PC-9 (cell line): ENCODE measurements at regions of chr19 and their contacts with region 1.

Region 1: GRCh38 chr19:44954824-44955586 is at the start of gene CLPTM1:
- DNase-seq: peak; percentile 93 to 94
- H3K4me3 ChIP-seq: peak within 1 kb of the TSS; percentile 89
- H3K27ac ChIP-seq: peak within 1 kb of the TSS; percentile 87
- H3K4me1 ChIP-seq: peaks cover 20% of the 10 kb centered on the region
- H3K27me3 ChIP-seq: no peaks in the 10 kb centered on the region
- CTCF ChIP-seq: no peak
- total RNA-seq, gene CLPTM1: 98.2 and 111 TPM in 2 replicates

Region 2: DNA sequence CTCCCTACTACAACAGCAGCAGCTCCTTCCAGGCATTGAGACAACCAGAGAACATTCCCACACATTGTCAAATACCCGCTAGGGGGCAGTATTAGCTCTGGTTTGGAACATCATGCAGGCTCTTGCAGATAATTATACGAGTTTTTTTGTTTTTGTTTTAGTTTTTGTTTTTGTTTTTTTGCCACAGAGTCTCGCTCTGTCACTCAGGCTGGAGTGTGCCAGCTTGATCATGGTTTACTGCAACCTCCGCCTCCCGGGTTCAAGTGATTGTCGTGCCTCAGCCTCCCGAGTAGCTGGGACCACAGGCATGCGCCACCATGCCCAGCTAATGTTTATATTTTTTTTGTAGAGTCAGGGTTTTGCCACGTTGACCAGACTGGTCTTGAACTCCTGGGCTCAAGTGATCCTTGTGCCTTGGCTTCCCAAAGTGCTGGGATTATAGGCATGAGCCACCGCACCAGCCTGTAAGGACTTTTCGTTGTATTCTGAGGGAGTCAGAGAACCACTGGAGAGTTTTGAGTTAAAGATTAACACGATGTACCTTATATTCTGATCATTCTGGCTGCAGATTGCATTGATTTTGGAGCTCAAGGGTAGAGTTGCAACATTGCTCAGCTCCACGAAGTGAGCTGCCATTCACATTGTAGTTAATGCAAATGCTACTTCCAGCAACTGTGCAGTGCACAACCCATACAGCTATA is 383.9 kb before region 1 on chr19:
- CTCF ChIA-PET with region 1: no interaction called
- POLR2A ChIA-PET with region 1: no interaction called
- intact Hi-C with region 1: loop called (anchors 10 kb)
- DNase-seq: peak; percentile 67 to 80
- H3K4me3 ChIP-seq: no peak overlapping the region
- H3K27ac ChIP-seq: no peak overlapping the region; the same call in 1 of the 2 replicates
- H3K4me1 ChIP-seq: peaks cover 67% of the 10 kb centered on the region
- H3K27me3 ChIP-seq: no peaks in the 10 kb centered on the region
- CTCF ChIP-seq: peak; percentile 92

Region 3: DNA sequence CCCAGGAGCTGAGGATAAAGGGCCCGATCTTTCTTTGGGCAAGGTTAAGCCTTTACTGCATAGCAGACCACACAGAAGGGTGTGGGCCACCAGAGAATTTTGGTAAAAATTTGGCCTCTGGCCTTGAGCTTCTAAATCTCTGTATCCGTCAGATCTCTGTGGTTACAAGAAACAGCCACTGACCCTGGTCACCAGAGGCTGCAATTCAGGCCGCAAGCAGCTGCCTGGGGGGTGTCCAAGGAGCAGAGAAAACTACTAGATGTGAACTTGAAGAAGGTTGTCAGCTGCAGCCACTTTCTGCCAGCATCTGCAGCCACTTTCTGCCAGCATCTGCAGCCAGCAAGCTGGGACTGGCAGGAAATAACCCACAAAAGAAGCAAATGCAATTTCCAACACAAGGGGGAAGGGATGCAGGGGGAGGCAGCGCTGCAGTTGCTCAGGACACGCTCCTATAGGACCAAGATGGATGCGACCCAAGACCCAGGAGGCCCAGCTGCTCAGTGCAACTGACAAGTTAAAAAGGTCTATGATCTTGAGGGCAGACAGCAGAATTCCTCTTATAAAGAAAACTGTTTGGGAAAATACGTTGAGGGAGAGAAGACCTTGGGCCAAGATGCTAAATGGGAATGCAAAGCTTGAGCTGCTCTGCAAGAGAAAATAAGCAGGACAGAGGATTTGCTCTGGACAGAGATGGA is 292.2 kb before region 1 on chr19:
- CTCF ChIA-PET with region 1: no interaction called
- POLR2A ChIA-PET with region 1: no interaction called
- intact Hi-C with region 1: no loop called
- DNase-seq: no peak
- H3K4me3 ChIP-seq: no peak overlapping the region
- H3K27ac ChIP-seq: no peak overlapping the region
- H3K4me1 ChIP-seq: no peaks in the 10 kb centered on the region
- H3K27me3 ChIP-seq: no peaks in the 10 kb centered on the region
- CTCF ChIP-seq: no peak

Region 4: GRCh38 chr19:44927746-44928145 is 27.3 kb before region 1 on chr19:
- CTCF ChIA-PET with region 1: no interaction called
- POLR2A ChIA-PET with region 1: no interaction called
- intact Hi-C with region 1: no loop called
- DNase-seq: peak in 1 of 2 experiments; percentile 34
- H3K4me3 ChIP-seq: no peak overlapping the region
- H3K27ac ChIP-seq: no peak overlapping the region
- H3K4me1 ChIP-seq: no peaks in the 10 kb centered on the region
- H3K27me3 ChIP-seq: 0 out of 2 replicates have a peak, but pooled peaks cover 5% of the 10 kb centered on the region
- CTCF ChIP-seq: no peak

Region 5: DNA sequence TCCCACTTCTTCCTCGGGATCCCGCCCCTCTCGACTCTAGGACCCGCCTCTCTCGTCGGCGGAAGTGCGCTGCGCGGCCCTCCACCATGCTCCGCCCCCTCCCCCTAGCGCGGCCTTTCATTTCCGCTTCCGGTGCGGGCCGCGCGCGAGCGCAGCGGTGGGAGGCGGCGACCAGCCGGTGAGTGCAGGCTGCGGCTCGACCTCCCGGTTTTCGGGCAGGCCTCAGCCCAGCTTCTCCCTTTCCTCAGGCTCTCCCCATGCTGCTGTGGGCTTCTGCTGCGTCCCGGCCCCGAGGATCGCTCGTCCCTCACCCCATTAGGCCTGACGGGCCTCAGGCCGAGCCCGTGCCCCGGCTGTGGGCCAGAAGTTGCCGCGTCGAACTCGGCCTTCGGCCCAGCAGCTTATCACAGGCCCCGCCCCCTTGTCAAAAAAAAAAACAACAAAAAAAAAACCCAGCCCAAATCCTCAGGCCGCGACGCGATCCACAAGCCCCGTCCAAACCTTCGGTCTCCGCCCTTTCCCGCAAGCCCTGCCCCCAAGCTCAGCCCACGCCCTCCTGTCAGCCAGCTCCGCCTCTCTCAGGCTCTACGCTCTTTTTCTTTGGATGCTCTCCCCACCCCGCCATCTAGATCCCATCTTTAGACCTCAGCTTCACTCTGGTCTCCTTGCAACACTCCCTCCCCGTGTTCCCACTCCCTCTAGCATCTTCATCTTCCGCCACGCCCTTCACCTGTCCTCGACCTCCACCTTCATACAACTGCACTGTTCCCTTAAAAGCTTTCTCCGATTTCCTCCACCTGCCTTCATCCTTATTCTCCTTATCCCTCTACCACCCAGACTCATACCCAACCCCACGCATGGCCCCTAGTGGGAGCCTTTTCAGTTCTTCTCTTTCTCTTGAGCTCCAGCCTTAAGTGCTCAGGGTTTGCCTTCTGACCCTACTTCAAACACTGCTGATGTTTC is 84.2 kb after region 1 on chr19 and contains the start of gene CLASRP:
- CTCF ChIA-PET with region 1: no interaction called
- POLR2A ChIA-PET with region 1: interaction called, 11 read pairs
- intact Hi-C with region 1: no loop called
- DNase-seq: peak; percentile 77 to 90
- H3K4me3 ChIP-seq: peak within 1 kb of the TSS; percentile 100
- H3K27ac ChIP-seq: peak within 1 kb of the TSS; percentile 81
- H3K4me1 ChIP-seq: peaks cover 12% of the 10 kb centered on the region
- H3K27me3 ChIP-seq: no peaks in the 10 kb centered on the region
- CTCF ChIP-seq: no peak
- total RNA-seq, gene CLASRP: 74.1 and 76.8 TPM in 2 replicates

Region 6: DNA sequence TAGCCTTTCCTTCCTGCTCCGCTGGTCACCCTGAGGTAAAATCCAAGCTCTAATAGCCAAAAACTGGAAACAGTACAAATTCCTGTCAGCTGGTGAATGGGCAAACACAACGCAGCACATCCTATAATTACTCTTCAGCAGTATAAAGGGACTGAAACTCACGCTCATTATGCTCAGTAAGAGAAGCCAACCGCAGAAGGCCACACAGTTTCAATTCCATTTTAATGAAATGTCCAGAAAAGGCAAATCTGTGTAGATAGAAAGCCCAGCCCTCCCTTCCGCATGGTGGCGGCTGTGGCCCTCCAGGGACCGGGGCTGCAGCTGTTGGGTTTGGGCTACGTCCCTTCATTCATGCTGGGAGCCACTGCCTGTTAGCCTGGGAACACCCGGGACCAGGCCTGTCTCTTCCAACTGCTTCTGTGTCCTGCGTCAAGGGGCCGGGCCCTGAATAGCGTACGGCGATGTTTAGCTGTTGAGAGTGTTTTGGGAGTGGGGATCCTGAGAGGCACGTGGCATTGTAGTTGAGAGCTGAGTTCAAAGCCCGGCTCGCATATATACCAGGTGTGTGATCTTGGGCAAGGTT is 182.3 kb after region 1 on chr19:
- CTCF ChIA-PET with region 1: no interaction called
- POLR2A ChIA-PET with region 1: interaction called, 29 read pairs
- intact Hi-C with region 1: no loop called
- DNase-seq: no peak
- H3K4me3 ChIP-seq: no peak overlapping the region
- H3K27ac ChIP-seq: no peak overlapping the region
- H3K4me1 ChIP-seq: no peaks in the 10 kb centered on the region
- H3K27me3 ChIP-seq: no peaks in the 10 kb centered on the region
- CTCF ChIP-seq: no peak

Region 7: GRCh38 chr19:46283771-46284170 is 1328.8 kb after region 1 on chr19:
- CTCF ChIA-PET with region 1: no interaction called
- POLR2A ChIA-PET with region 1: no interaction called
- intact Hi-C with region 1: no loop called
- DNase-seq: no peak
- H3K4me3 ChIP-seq: no peak overlapping the region
- H3K27ac ChIP-seq: no peak overlapping the region
- H3K4me1 ChIP-seq: peaks cover under 1% of the 10 kb centered on the region; the same call in 1 of the 2 replicates
- H3K27me3 ChIP-seq: no peaks in the 10 kb centered on the region
- CTCF ChIP-seq: no peak